Caco-2 (cell line): ENCODE measurements at regions of chr16 and their contacts with region 1.

Region 1: GRCh38 chr16:23999663-24000062 is 163.9 kb downstream of the PRKCB start:
- DNase-seq: no peak
- H3K4me3 ChIP-seq: no peak overlapping the region
- H3K4me3 Mint-ChIP-seq: no peak overlapping the region
- H3K27ac Mint-ChIP-seq: no peak overlapping the region
- H3K4me1 ChIP-seq: no peaks in the 10 kb centered on the region
- H3K4me1 Mint-ChIP-seq: no peaks in the 10 kb centered on the region
- H3K27me3 ChIP-seq: no peaks in the 10 kb centered on the region
- H3K27me3 Mint-ChIP-seq: no peaks in the 10 kb centered on the region
- CTCF ChIP-seq: no peak

Region 2: GRCh38 chr16:23950898-23951297 is 48.8 kb before region 1 on chr16:
- CTCF ChIA-PET with region 1: interaction called, 11 read pairs
- POLR2A ChIA-PET with region 1: no interaction called
- intact Hi-C with region 1: no loop called
- DNase-seq: no peak
- H3K4me3 ChIP-seq: no peak overlapping the region
- H3K4me3 Mint-ChIP-seq: no peak overlapping the region
- H3K27ac Mint-ChIP-seq: no peak overlapping the region
- H3K4me1 ChIP-seq: no peaks in the 10 kb centered on the region
- H3K4me1 Mint-ChIP-seq: no peaks in the 10 kb centered on the region
- H3K27me3 ChIP-seq: no peaks in the 10 kb centered on the region
- H3K27me3 Mint-ChIP-seq: peaks cover 3% of the 10 kb centered on the region
- CTCF ChIP-seq: no peak

Region 3: GRCh38 chr16:23974223-23974622 is 25.4 kb before region 1 on chr16:
- CTCF ChIA-PET with region 1: no interaction called
- POLR2A ChIA-PET with region 1: no interaction called
- intact Hi-C with region 1: loop called (anchors 1 kb)
- DNase-seq: peak; percentile 9 to 36
- H3K4me3 ChIP-seq: no peak overlapping the region
- H3K4me3 Mint-ChIP-seq: no peak overlapping the region
- H3K27ac Mint-ChIP-seq: no peak overlapping the region
- H3K4me1 ChIP-seq: no peaks in the 10 kb centered on the region
- H3K4me1 Mint-ChIP-seq: no peaks in the 10 kb centered on the region
- H3K27me3 ChIP-seq: no peaks in the 10 kb centered on the region; the same call in 1 of the 2 replicates
- H3K27me3 Mint-ChIP-seq: peaks cover 13% of the 10 kb centered on the region
- CTCF ChIP-seq: no peak

Region 4: DNA sequence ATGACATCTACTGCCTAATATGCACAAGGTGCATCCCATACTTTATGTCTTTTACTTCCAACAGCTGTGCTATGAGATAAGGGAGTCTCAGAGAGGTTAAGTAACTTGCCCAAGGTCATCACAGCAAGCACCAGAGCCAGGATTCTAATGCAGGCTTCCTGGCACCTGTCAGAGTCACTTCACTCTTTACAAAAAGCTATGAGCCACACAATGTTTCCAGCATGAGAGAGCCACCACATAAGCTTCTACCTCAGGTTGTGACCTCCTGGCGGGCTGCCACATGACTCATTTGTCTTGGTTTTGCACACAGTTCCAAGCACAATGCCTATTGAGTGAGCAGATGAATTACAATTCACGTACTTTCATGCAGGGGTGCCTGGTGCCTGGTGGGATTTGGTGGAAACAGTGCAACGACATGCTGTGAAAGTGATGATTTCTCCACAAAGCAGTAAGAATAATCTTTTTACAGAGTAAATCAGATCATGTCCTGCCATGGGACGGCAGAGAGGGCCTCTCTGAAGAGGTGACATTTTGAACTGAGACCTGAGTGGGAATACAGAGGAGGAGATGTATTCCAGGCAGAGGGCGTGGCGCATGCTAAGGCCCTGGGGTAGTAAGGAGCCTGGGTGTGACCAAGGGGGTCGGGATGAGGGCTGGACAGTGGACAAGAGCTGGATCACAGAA is 309.7 kb after region 1 on chr16:
- CTCF ChIA-PET with region 1: no interaction called
- POLR2A ChIA-PET with region 1: no interaction called
- intact Hi-C with region 1: no loop called
- DNase-seq: no peak
- H3K4me3 ChIP-seq: no peak overlapping the region
- H3K4me3 Mint-ChIP-seq: no peak overlapping the region
- H3K27ac Mint-ChIP-seq: no peak overlapping the region
- H3K4me1 ChIP-seq: no peaks in the 10 kb centered on the region
- H3K4me1 Mint-ChIP-seq: no peaks in the 10 kb centered on the region
- H3K27me3 ChIP-seq: no peaks in the 10 kb centered on the region
- H3K27me3 Mint-ChIP-seq: peaks cover 6% of the 10 kb centered on the region
- CTCF ChIP-seq: no peak